Activated T-helper 2 cell treated with anti-CD3 and anti-CD28 coated beads, Interferon-gamma antibody, Interleukin-2, Interleukin-4, amounts not matched to agents 10 μg/mL and 5 μg/mL and 100 μg/mL, durations not matched to agents 14 hours and 24 hours and 36 hours (primary cell): ENCODE measurements at regions of chr18 and their contacts with region 1.

Region 1: DNA sequence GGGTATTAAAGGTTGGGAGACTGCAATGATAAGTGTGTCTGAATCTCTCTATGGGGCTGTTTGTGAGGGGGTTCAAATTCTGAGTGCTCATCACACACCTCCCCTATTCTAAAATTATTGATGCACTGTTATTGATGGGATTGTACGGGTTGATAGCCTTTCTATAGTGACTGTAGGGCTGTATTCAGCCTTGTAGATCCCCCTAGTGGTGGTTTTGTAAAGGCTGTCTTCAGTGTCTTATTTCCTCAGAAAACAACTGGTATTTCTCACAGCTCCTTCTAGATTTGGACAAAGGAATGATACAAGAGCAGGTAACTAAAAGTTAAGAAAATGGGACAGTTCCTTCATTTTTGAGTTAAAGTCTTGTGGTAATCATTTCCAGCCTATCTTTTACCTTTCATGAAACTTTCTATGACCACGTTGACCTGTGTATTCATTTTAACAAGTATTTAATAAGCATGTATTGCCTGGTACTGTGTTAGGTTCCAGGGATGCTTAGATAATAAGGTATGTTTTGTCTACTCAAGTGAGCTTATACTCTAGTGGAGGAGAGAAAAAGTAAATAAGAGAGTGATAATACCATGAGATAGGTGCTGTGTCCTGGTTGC is 21.2 kb downstream of the SMAD4 start:
- DNase-seq: no peak
- H3K4me3 Mint-ChIP-seq: no peak overlapping the region
- H3K27ac Mint-ChIP-seq: peak overlapping the region; percentile 10
- H3K4me1 Mint-ChIP-seq: peaks cover 26% of the 10 kb centered on the region
- H3K27me3 Mint-ChIP-seq: no peaks in the 10 kb centered on the region

Region 2: GRCh38 chr18:50494569-50494968 is 556.6 kb before region 1 on chr18:
- intact Hi-C with region 1: no loop called
- DNase-seq: no peak
- H3K4me3 Mint-ChIP-seq: no peak overlapping the region
- H3K27ac Mint-ChIP-seq: no peak overlapping the region
- H3K4me1 Mint-ChIP-seq: no peaks in the 10 kb centered on the region
- H3K27me3 Mint-ChIP-seq: peaks cover 3% of the 10 kb centered on the region

Region 3: DNA sequence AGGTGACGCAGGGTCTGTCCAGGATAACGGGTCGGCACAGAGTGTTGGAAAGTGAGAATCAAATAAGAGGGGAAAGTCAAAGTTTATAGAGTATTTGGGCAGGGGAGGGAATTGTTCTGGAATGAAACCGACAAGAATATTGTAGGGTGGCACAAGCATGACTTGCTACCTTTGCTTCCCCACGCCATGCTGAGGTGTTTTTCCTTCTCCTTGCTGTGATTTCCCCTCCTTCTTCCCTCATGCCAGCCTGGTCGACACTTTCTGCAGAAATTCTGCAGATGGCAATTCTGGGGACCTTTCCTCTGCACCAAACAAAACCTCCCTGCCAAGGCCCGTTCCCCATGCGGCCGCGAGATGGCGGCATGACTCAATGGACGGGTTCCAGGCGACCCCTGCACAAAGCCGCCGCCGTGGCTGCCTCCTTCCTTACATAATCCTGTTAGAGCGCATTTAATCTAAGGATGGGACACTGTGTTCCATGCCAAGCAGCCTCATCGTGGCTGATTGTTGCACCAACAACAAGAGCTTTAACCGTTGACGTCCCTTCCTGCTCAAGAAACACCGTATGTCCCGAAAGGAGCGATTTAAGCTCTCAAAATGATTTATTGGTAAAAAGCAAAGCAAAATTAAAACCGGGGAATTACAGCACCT is 231.4 kb before region 1 on chr18 and contains the start of gene MRO:
- intact Hi-C with region 1: loop called (anchors 1 kb)
- DNase-seq: peak; percentile 66
- H3K4me3 Mint-ChIP-seq: no peak within 1 kb of the TSS
- H3K27ac Mint-ChIP-seq: no peak within 1 kb of the TSS
- H3K4me1 Mint-ChIP-seq: no peaks in the 10 kb centered on the region
- H3K27me3 Mint-ChIP-seq: peaks cover 19% of the 10 kb centered on the region
- total RNA-seq, gene MRO: not detected in 2 replicates

Region 4: DNA sequence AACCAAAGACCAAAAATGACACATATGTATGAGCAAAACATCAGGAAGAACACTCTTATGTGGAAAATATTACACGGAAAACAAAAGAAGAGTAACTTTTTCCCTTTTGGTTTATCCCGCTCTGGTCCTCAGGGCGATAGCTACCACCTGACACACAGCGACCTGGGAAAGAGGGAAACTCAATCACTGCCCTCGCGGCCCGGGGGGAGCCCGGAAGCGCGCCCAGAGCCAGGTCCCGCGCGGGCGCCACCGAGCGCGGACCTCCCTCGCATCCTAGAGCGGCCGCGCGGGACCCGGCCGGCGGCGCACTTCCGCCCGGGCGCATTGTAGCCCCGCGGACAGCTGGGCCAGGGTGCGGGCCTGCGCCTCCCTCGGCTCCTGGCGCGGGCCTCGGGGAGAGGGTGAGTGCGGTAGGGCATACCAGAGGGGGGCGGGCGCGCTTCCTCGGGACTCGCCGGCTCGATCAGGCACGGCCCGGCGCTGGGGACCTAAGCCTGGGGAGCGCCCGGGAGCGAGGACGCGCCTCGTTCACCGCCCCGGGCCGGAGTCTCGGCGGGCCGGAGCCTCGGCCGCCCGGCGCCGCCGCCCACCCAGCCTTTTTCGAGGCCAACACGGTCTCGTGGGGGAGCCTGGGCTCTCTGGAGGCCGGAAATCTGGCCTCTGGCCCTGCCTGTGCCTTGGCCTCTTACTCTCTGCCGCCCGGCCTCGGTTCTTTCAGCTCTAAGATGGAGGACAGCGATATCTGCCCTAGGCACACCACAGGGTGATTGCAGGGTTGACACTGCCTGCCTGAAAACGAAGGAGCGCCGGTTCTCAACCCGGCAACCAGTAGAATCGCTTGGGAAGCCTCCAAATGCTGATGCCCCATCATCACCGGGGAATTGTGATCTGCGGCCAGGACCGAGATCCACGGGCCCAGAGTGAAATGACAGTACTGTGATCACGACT is 83.2 kb before region 1 on chr18 and contains the start of gene ELAC1:
- intact Hi-C with region 1: loop called (anchors 5 kb)
- DNase-seq: peak; percentile 62
- H3K4me3 Mint-ChIP-seq: peak within 1 kb of the TSS; percentile 89
- H3K27ac Mint-ChIP-seq: peak within 1 kb of the TSS; percentile 90
- H3K4me1 Mint-ChIP-seq: peaks cover 18% of the 10 kb centered on the region
- H3K27me3 Mint-ChIP-seq: no peaks in the 10 kb centered on the region
- total RNA-seq, gene ELAC1: 6.7 and 6.8 TPM in 2 replicates

Region 5: GRCh38 chr18:51029694-51030536 is 21.3 kb before region 1 on chr18 and contains the start of gene SMAD4:
- intact Hi-C with region 1: loop called (anchors 1 kb)
- DNase-seq: peak; percentile 97
- H3K4me3 Mint-ChIP-seq: peak within 1 kb of the TSS; percentile 97
- H3K27ac Mint-ChIP-seq: peak within 1 kb of the TSS; percentile 92
- H3K4me1 Mint-ChIP-seq: peaks cover 44% of the 10 kb centered on the region
- H3K27me3 Mint-ChIP-seq: no peaks in the 10 kb centered on the region
- total RNA-seq, gene SMAD4: 73.0 and 77.1 TPM in 2 replicates